ENCODE measurements at regions of chr10 and their contacts with region 1.

Region 1: GRCh38 chr10:62183442-62183841 is 85.2 kb downstream of the RTKN2 start:
- DNase-seq: peak; percentile 81 to 92 (median 88)
- H3K4me3 ChIP-seq: no peak overlapping the region
- H3K4me3 Mint-ChIP-seq: peak overlapping the region in 7 of 8 donors; percentile 24 to 65 (median 51)
- H3K27ac ChIP-seq: peak overlapping the region; percentile 42
- H3K27ac Mint-ChIP-seq: peak overlapping the region; percentile 83 to 95 (median 92)
- H3K4me1 ChIP-seq: peaks cover 71% of the 10 kb centered on the region
- H3K4me1 Mint-ChIP-seq: peaks cover 57 to 84% (median 77%) of the 10 kb centered on the region in 4 donors
- H3K27me3 ChIP-seq: no peaks in the 10 kb centered on the region
- H3K27me3 Mint-ChIP-seq: no peaks in the 10 kb centered on the region

Region 2: DNA sequence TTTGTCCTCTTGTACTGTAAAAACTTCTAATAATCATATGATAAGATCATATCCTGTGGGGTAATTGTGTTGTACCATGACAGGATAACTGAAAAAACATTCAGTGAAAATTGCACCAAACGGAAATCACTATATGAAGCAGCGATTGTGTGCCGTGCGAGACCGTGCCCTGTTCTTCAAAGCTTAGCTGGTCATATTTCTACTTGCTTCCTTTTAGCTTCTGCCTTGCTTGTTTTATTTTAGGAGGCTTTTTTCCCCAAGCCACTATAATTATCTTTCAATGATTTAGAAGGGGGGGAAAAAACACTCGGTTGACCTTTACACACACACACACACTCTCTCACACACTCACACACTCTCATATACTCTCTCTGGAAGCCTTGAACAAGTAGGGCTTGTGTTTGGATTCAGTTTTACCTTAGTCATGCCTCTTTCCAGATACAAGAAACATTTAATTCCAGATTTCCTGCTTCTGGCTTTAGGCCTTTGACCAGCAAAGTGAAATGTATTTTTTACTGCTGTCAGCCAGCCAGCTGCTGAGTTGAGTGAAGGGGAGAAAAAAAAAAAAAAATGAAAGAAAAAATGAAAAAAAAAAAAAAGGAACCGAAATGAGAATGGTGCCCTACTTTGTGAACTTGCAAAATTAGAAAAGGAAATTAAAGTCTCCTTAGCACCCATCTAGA is 100.6 kb before region 1 on chr10:
- CTCF ChIA-PET with region 1: interaction called, 3 read pairs
- POLR2A ChIA-PET with region 1: interaction called, 22 read pairs
- intact Hi-C with region 1: loop called (anchors 1 kb)
- DNase-seq: peak; percentile 58 to 74 (median 64)
- H3K4me3 ChIP-seq: peak overlapping the region in 1 of 2 donors; percentile 3
- H3K4me3 Mint-ChIP-seq: peak overlapping the region; percentile 58 to 83 (median 73)
- H3K27ac ChIP-seq: peak overlapping the region; percentile 45
- H3K27ac Mint-ChIP-seq: peak overlapping the region; percentile 24 to 95 (median 89)
- H3K4me1 ChIP-seq: peaks cover 79% of the 10 kb centered on the region
- H3K4me1 Mint-ChIP-seq: peaks cover 44 to 77% (median 62%) of the 10 kb centered on the region in 4 donors
- H3K27me3 ChIP-seq: no peaks in the 10 kb centered on the region
- H3K27me3 Mint-ChIP-seq: no peaks in the 10 kb centered on the region

Region 3: GRCh38 chr10:62109587-62110293 is 73.7 kb before region 1 on chr10:
- CTCF ChIA-PET with region 1: no interaction called
- POLR2A ChIA-PET with region 1: interaction called, 14 read pairs
- intact Hi-C with region 1: no loop called
- DNase-seq: no peak
- H3K4me3 ChIP-seq: no peak overlapping the region
- H3K4me3 Mint-ChIP-seq: peak overlapping the region in 6 of 8 donors; percentile 12 to 79 (median 68)
- H3K27ac ChIP-seq: no peak overlapping the region
- H3K27ac Mint-ChIP-seq: peak overlapping the region; percentile 0 to 82 (median 70)
- H3K4me1 ChIP-seq: peaks cover 31% of the 10 kb centered on the region
- H3K4me1 Mint-ChIP-seq: peaks cover 32 to 52% (median 36%) of the 10 kb centered on the region in 4 donors
- H3K27me3 ChIP-seq: no peaks in the 10 kb centered on the region
- H3K27me3 Mint-ChIP-seq: no peaks in the 10 kb centered on the region

Region 4: GRCh38 chr10:62121187-62121530 is 62.3 kb before region 1 on chr10:
- CTCF ChIA-PET with region 1: no interaction called
- POLR2A ChIA-PET with region 1: interaction called, 3 read pairs
- intact Hi-C with region 1: loop called (anchors 2 kb)
- DNase-seq: peak in 1 of 5 donors; percentile 15
- H3K4me3 ChIP-seq: no peak overlapping the region
- H3K4me3 Mint-ChIP-seq: peak overlapping the region in 7 of 8 donors; percentile 6 to 62 (median 41)
- H3K27ac ChIP-seq: no peak overlapping the region
- H3K27ac Mint-ChIP-seq: peak overlapping the region in 5 of 7 donors; percentile 15 to 83 (median 37)
- H3K4me1 ChIP-seq: peaks cover 15% of the 10 kb centered on the region
- H3K4me1 Mint-ChIP-seq: peaks cover 16 to 34% (median 22%) of the 10 kb centered on the region in 4 donors
- H3K27me3 ChIP-seq: no peaks in the 10 kb centered on the region
- H3K27me3 Mint-ChIP-seq: no peaks in the 10 kb centered on the region

Region 5: GRCh38 chr10:62194924-62195674 is 11.7 kb after region 1 on chr10:
- CTCF ChIA-PET with region 1: interaction called, 4 read pairs
- POLR2A ChIA-PET with region 1: interaction called, 11 read pairs
- intact Hi-C with region 1: loop called (anchors 1 kb)
- DNase-seq: no peak
- H3K4me3 ChIP-seq: no peak overlapping the region
- H3K4me3 Mint-ChIP-seq: peak overlapping the region in 1 of 8 donors; percentile 21
- H3K27ac ChIP-seq: no peak overlapping the region
- H3K27ac Mint-ChIP-seq: peak overlapping the region in 3 of 7 donors; percentile 60 to 83 (median 82)
- H3K4me1 ChIP-seq: peaks cover 30% of the 10 kb centered on the region
- H3K4me1 Mint-ChIP-seq: peaks cover 12 to 20% (median 13%) of the 10 kb centered on the region in 4 donors
- H3K27me3 ChIP-seq: no peaks in the 10 kb centered on the region
- H3K27me3 Mint-ChIP-seq: no peaks in the 10 kb centered on the region

Region 6: DNA sequence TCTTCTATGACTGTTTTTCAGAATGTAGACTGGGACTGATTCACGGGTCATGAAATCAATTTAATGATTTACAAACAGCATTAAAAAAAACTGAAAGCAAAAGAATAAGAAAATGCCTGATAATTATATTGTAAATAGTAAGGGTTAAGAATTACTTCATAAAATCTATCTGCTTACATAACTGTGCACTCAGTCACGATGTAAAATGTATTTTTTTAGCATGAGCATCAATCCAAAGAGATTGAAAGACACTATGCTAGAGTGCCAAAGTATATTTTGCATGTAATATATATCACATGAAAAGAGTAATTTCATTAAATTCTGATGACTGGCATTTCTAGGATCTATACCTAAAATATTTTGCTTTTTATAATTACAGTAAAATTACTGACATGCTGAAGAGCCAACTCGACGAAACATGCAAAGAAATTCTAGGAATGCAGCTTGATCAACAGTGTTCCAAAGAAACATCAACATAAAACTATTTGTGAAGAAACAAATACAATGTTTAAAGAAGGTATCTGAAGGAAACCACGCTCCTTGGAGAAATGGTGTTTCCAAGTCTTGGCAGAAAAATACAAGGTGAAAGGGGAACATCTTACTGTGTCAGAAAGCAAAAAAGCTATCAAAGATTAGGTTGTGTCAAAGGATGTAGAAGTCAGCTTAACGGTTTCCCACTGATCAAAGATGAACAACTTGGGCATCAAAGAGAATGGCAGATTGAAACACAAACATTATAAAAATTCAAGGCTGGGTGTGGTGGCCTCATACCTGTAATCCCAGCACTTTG is 50.2 kb after region 1 on chr10:
- CTCF ChIA-PET with region 1: no interaction called
- POLR2A ChIA-PET with region 1: interaction called, 20 read pairs
- intact Hi-C with region 1: no loop called
- DNase-seq: no peak
- H3K4me3 ChIP-seq: no peak overlapping the region
- H3K4me3 Mint-ChIP-seq: peak overlapping the region; percentile 60 to 85 (median 67)
- H3K27ac ChIP-seq: no peak overlapping the region
- H3K27ac Mint-ChIP-seq: peak overlapping the region in 6 of 7 donors; percentile 4 to 63 (median 36)
- H3K4me1 ChIP-seq: peaks cover 35% of the 10 kb centered on the region
- H3K4me1 Mint-ChIP-seq: peaks cover 15 to 53% (median 22%) of the 10 kb centered on the region in 4 donors
- H3K27me3 ChIP-seq: no peaks in the 10 kb centered on the region
- H3K27me3 Mint-ChIP-seq: no peaks in the 10 kb centered on the region

Region 7: DNA sequence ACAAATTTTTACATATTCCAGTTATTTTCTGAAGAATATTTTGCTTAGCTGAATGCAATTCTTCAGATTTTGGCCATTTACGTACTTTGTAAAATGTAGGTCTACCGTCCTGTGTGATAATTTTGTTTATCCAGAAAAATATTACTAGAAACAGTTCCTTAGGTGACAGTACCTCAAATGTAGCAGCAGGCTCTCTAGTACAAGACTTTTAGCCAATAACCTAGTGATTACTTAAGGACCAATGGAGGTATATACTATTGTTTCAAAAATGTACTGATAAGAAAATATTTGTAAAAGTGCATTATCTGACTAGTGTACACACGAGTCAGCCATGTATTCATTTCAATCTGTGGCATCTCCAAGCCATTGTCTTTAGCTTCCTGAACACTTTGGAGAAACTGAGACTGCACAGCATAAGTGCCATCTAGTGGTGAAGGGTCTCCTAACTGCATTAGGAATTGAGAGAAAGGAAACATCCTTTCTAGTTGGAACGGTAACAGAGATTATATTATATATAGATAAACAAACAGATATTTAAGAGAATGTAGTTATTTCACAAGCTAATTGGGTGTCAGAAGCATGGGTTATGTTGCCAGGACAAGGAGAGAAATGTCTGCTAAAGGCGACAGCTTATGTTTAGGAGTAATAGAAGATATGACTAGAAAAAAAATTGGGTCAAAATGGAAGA is 61.5 kb after region 1 on chr10:
- CTCF ChIA-PET with region 1: interaction called, 26 read pairs
- POLR2A ChIA-PET with region 1: interaction called, 20 read pairs
- intact Hi-C with region 1: loop called (anchors 1 kb)
- DNase-seq: peak; percentile 52 to 68 (median 65)
- H3K4me3 ChIP-seq: no peak overlapping the region
- H3K4me3 Mint-ChIP-seq: peak overlapping the region in 6 of 8 donors; percentile 22 to 62 (median 42)
- H3K27ac ChIP-seq: no peak overlapping the region
- H3K27ac Mint-ChIP-seq: peak overlapping the region in 4 of 7 donors; percentile 11 to 70 (median 37)
- H3K4me1 ChIP-seq: peaks cover 37% of the 10 kb centered on the region
- H3K4me1 Mint-ChIP-seq: peaks cover 22 to 35% (median 25%) of the 10 kb centered on the region in 4 donors
- H3K27me3 ChIP-seq: no peaks in the 10 kb centered on the region
- H3K27me3 Mint-ChIP-seq: peaks cover 0 to 1% of the 10 kb centered on the region in 2 donors